ENCODE measurements at regions of chr2 and their contacts with region 1.

Region 1: GRCh38 chr2:65064728-65065552 is 8.7 kb downstream of the CEP68 start:
- DNase-seq: peak in 8 of 14 experiments; percentile 19 to 84 (median 40)
- ATAC-seq: peak; percentile 91
- H3K4me3 ChIP-seq: no peak overlapping the region
- H3K4me3 Mint-ChIP-seq: no peak overlapping the region
- H3K27ac ChIP-seq: peak overlapping the region in 1 of 2 donors; percentile 33
- H3K27ac Mint-ChIP-seq: peak overlapping the region; percentile 32
- H3K4me1 ChIP-seq: peaks cover 58% of the 10 kb centered on the region
- H3K4me1 Mint-ChIP-seq: peaks cover 58% of the 10 kb centered on the region
- H3K27me3 ChIP-seq: no peaks in the 10 kb centered on the region
- H3K27me3 Mint-ChIP-seq: no peaks in the 10 kb centered on the region
- CTCF ChIP-seq: peak; percentile 72

Region 2: GRCh38 chr2:65169760-65170136 is 104.8 kb after region 1 on chr2:
- CTCF ChIA-PET with region 1: interaction called, 17 read pairs
- POLR2A ChIA-PET with region 1: no interaction called
- intact Hi-C with region 1: loop called (anchors 1 kb)
- DNase-seq: no peak
- ATAC-seq: no peak
- H3K4me3 ChIP-seq: no peak overlapping the region
- H3K4me3 Mint-ChIP-seq: no peak overlapping the region
- H3K27ac ChIP-seq: no peak overlapping the region
- H3K27ac Mint-ChIP-seq: no peak overlapping the region
- H3K4me1 ChIP-seq: no peaks in the 10 kb centered on the region
- H3K4me1 Mint-ChIP-seq: no peaks in the 10 kb centered on the region
- H3K27me3 ChIP-seq: no peaks in the 10 kb centered on the region
- H3K27me3 Mint-ChIP-seq: no peaks in the 10 kb centered on the region
- CTCF ChIP-seq: no peak

Region 3: GRCh38 chr2:65186872-65187851 is 122.2 kb after region 1 on chr2:
- CTCF ChIA-PET with region 1: interaction called, 21 read pairs
- POLR2A ChIA-PET with region 1: no interaction called
- intact Hi-C with region 1: loop called (anchors 1 to 5 kb)
- DNase-seq: peak; percentile 43 to 78 (median 58)
- ATAC-seq: peak; percentile 96
- H3K4me3 ChIP-seq: no peak overlapping the region
- H3K4me3 Mint-ChIP-seq: no peak overlapping the region
- H3K27ac ChIP-seq: no peak overlapping the region
- H3K27ac Mint-ChIP-seq: no peak overlapping the region
- H3K4me1 ChIP-seq: peaks cover 5% of the 10 kb centered on the region
- H3K4me1 Mint-ChIP-seq: peaks cover 9% of the 10 kb centered on the region
- H3K27me3 ChIP-seq: peaks cover 3 to 4% of the 10 kb centered on the region in 2 experiments
- H3K27me3 Mint-ChIP-seq: peaks cover 29% of the 10 kb centered on the region
- CTCF ChIP-seq: peak; percentile 80

Region 4: GRCh38 chr2:65432227-65433190 is 367.6 kb after region 1 on chr2 and contains the start of gene SPRED2:
- CTCF ChIA-PET with region 1: no interaction called
- POLR2A ChIA-PET with region 1: no interaction called
- intact Hi-C with region 1: loop called in 1 of 2 experiments (anchors 5 kb)
- DNase-seq: peak in 13 of 14 experiments; percentile 36 to 89 (median 60)
- ATAC-seq: peak; percentile 47
- H3K4me3 ChIP-seq: peak within 1 kb of the TSS; percentile 75
- H3K4me3 Mint-ChIP-seq: peak within 1 kb of the TSS; percentile 94
- H3K27ac ChIP-seq: no peak within 1 kb of the TSS
- H3K27ac Mint-ChIP-seq: peak within 1 kb of the TSS; percentile 42
- H3K4me1 ChIP-seq: peaks cover 49% of the 10 kb centered on the region
- H3K4me1 Mint-ChIP-seq: peaks cover 23% of the 10 kb centered on the region
- H3K27me3 ChIP-seq: peaks cover 29 to 34% of the 10 kb centered on the region in 2 experiments
- H3K27me3 Mint-ChIP-seq: peaks cover 57% of the 10 kb centered on the region
- CTCF ChIP-seq: no peak
- total RNA-seq, gene SPRED2: 2.5 to 2.8 TPM

Region 5: DNA sequence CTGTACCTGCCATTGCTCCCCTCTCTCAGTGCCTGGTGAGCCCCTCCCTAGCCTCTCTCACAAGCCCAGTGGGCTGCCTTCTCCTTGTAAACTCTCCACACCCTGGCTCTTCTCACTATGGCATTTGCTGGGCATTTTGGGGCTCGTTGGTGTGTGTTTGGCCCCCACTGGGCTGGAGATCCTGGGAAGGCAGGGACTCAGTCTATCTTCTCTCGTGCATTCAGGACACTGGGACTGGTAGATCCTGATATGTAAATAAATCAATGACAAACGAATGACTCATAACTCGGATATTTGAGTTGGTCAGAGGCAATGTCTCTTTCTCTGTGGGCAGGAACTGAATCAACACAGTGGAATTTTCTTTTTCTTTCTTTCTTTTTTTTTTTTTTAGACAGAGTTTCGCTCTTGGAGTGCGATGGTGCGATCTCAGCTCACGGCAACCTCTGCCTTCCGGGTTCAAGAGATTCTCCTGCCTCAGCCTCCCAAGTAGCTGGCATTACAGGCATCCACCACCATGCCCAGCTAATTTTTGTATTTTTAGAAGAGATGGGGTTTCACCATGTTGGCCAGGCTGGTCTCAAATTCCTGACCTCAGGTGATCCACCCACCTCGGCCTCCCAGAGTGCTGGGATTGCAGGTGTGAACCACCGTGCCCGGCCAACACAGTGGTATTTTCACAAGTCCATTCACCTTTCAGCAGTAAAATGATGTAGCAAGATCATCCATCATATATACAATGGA is 512.1 kb after region 1 on chr2:
- CTCF ChIA-PET with region 1: no interaction called
- POLR2A ChIA-PET with region 1: no interaction called
- intact Hi-C with region 1: loop called (anchors 5 to 10 kb)
- DNase-seq: no peak
- ATAC-seq: no peak
- H3K4me3 ChIP-seq: no peak overlapping the region
- H3K4me3 Mint-ChIP-seq: no peak overlapping the region
- H3K27ac ChIP-seq: no peak overlapping the region
- H3K27ac Mint-ChIP-seq: no peak overlapping the region
- H3K4me1 ChIP-seq: no peaks in the 10 kb centered on the region
- H3K4me1 Mint-ChIP-seq: no peaks in the 10 kb centered on the region
- H3K27me3 ChIP-seq: no peaks in the 10 kb centered on the region
- H3K27me3 Mint-ChIP-seq: peaks cover 18% of the 10 kb centered on the region
- CTCF ChIP-seq: no peak